OCI-LY7 (cell line): ENCODE measurements at regions of chr5 and their contacts with region 1.

Region 1: DNA sequence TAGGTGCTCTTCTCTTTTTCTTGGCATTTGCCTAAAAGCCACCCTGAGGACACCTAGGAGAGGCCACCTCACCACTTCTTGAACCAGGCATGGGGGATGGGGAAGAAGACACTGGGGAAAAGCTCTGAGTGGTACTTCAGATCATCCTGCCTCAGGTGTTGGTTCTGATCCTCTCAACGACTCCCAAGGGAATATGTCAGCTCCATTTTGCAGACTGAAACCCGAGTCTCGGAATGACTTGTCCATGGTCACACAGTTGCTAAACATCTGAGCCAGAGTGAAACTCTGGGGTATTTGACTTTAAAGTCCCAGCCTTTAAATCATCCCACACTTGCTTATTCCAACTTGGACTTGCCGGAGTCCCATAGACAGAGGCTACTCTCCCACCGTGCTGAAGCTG is 120.6 kb upstream of the GABRP start:
- DNase-seq: no peak
- H3K4me3 ChIP-seq: no peak overlapping the region
- H3K27ac ChIP-seq: no peak overlapping the region
- H3K4me1 ChIP-seq: no peaks in the 10 kb centered on the region
- CTCF ChIP-seq: no peak

Region 2: GRCh38 chr5:170070556-170071412 is 592.2 kb before region 1 on chr5:
- CTCF ChIA-PET with region 1: no interaction called
- POLR2A ChIA-PET with region 1: no interaction called
- intact Hi-C with region 1: no loop called
- DNase-seq: peak; percentile 15
- H3K4me3 ChIP-seq: no peak overlapping the region
- H3K27ac ChIP-seq: no peak overlapping the region
- H3K4me1 ChIP-seq: no peaks in the 10 kb centered on the region
- CTCF ChIP-seq: peak; percentile 77

Region 3: GRCh38 chr5:170100066-170100943 is 562.7 kb before region 1 on chr5:
- CTCF ChIA-PET with region 1: no interaction called
- POLR2A ChIA-PET with region 1: no interaction called
- intact Hi-C with region 1: no loop called
- DNase-seq: peak; percentile 72
- H3K4me3 ChIP-seq: no peak overlapping the region
- H3K27ac ChIP-seq: no peak overlapping the region
- H3K4me1 ChIP-seq: no peaks in the 10 kb centered on the region
- CTCF ChIP-seq: peak; percentile 86

Region 4: GRCh38 chr5:170420780-170421412 is 242.1 kb before region 1 on chr5:
- CTCF ChIA-PET with region 1: no interaction called
- POLR2A ChIA-PET with region 1: no interaction called
- intact Hi-C with region 1: no loop called
- DNase-seq: peak; percentile 59
- H3K4me3 ChIP-seq: no peak overlapping the region
- H3K27ac ChIP-seq: no peak overlapping the region
- H3K4me1 ChIP-seq: no peaks in the 10 kb centered on the region
- CTCF ChIP-seq: peak; percentile 87

Region 5: DNA sequence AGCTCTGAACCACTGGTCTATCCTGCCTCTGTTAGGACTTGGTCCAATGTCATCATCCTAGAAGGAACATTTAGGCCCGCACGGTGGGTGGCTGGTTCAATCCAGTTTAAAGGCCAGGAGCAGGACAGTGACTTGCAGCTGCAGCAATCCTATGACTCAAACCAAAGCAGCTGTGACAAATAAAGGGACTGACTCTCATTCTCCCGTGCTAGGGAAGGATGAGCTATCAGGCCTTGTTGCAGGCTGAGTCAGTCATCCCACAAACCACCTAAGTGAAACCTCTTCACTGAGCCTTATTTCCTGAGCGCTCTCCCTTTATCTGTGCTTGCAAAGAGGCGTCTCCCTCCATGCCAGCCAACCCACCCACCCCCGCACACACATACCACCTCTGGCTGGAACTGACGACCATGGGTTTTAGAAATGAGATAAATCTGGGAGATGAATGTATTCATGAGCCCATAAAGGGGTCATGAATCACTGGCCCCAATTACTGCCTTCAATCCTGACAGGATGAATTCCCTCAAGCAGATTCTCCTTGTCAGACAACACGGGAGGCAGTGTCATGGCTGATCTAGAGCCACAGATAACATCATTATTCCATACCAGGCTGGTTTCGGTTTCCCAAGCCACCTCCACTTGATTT is 65.7 kb before region 1 on chr5:
- CTCF ChIA-PET with region 1: no interaction called
- POLR2A ChIA-PET with region 1: no interaction called
- intact Hi-C with region 1: loop called (anchors 10 kb)
- DNase-seq: no peak
- H3K4me3 ChIP-seq: no peak overlapping the region
- H3K27ac ChIP-seq: no peak overlapping the region
- H3K4me1 ChIP-seq: no peaks in the 10 kb centered on the region
- CTCF ChIP-seq: no peak

Region 6: GRCh38 chr5:170623576-170624181 is 39.3 kb before region 1 on chr5:
- CTCF ChIA-PET with region 1: no interaction called
- POLR2A ChIA-PET with region 1: no interaction called
- intact Hi-C with region 1: no loop called
- DNase-seq: no peak
- H3K4me3 ChIP-seq: no peak overlapping the region
- H3K27ac ChIP-seq: no peak overlapping the region
- H3K4me1 ChIP-seq: no peaks in the 10 kb centered on the region
- CTCF ChIP-seq: peak; percentile 68